ENCODE measurements at regions of chr13 and their contacts with region 1.

Region 1: DNA sequence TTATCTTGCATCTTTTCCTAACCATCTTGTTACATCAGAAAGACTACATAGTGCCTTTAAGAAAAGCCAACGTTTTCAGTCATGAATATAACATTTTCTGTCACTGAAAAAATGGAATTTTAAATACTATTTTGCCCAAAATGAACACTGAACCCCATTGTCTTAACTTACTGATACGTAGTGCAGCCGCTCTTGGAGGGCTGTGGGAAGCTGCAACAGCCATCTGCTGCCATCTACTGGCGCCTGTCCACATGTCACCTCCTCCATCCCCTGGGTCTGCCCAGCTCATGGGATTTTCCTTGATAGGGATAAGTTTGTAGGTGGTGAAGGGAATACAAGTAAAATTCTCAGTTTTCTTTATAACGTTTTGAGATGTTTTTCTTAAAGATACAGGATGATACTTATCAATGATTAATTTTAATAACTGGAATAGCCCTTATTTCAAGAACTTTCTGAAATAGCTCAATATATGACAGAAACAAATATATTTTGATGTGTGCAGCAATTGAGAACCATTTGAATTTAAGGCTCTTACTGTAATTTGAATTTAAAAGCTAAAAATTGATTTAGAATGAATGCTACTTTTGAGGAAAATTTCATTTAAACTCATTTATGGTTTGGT is 73.7 kb downstream of the GGACT start:
- DNase-seq: peak; percentile 71 to 85 (median 76)
- ATAC-seq: peak; percentile 91 to 94 (median 92)
- H3K4me3 ChIP-seq: no peak overlapping the region
- H3K27ac ChIP-seq: no peak overlapping the region
- H3K4me1 ChIP-seq: peaks cover 0 to 20% (median 5%) of the 10 kb centered on the region in 12 donors
- H3K27me3 ChIP-seq: no peaks in the 10 kb centered on the region
- CTCF ChIP-seq: peak; percentile 83 to 96 (median 93)
- POLR2A ChIP-seq: no peak

Region 2: GRCh38 chr13:99909824-99910619 is 604.9 kb before region 1 on chr13:
- intact Hi-C with region 1: loop called in 5 of 10 experiments (anchors 5 kb)
- DNase-seq: no peak
- ATAC-seq: peak; percentile 20 to 70 (median 61)
- H3K4me3 ChIP-seq: no peak overlapping the region
- H3K27ac ChIP-seq: no peak overlapping the region
- H3K4me1 ChIP-seq: no peaks in the 10 kb centered on the region
- H3K27me3 ChIP-seq: peaks cover 0 to 72% (median 9%) of the 10 kb centered on the region in 9 donors
- CTCF ChIP-seq: no peak
- POLR2A ChIP-seq: no peak

Region 3: DNA sequence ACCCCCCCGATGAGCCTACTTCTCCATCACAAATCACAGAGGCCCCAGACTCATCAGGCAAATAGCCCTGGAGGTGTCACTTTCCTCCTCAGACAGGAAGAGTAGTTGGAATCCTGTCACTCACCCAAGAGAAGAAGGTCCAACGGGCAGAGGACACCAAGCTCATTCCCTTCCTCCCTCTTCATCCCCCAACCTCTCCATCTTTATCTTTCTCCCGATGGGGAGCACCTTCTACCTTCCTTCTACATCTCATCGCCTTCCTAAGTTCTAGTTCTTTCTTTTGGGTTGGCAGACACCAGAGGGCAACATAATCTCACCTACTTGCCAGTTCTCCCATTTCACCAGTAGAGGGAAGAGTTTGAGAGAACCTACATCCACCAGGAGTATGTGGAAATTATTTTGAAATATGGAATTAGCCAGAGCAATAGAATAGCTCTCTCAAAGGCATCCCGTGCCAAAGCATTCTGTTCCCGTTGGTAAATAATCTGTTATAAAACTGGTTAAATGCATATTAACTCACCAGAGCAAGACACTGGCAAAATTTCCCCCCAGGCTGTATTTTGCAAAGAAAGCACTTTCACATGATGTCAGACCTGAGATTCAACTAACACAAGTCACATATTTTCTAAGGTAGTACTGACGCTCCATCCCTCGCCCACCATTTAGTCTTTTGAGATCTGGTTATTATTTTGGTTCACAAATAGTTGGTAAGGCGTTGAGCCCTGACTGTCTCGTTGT is 598.4 kb before region 1 on chr13:
- intact Hi-C with region 1: loop called in 9 of 10 experiments (anchors 2 to 5 kb)
- DNase-seq: no peak
- ATAC-seq: peak in 3 of 4 donors; percentile 67 to 76 (median 69)
- H3K4me3 ChIP-seq: no peak overlapping the region
- H3K27ac ChIP-seq: no peak overlapping the region
- H3K4me1 ChIP-seq: no peaks in the 10 kb centered on the region
- H3K27me3 ChIP-seq: peaks cover 0 to 46% (median 8%) of the 10 kb centered on the region in 9 donors
- CTCF ChIP-seq: peak; percentile 61 to 88 (median 78)
- POLR2A ChIP-seq: no peak

Region 4: GRCh38 chr13:100235311-100235901 is 279.5 kb before region 1 on chr13:
- intact Hi-C with region 1: loop called in 5 of 10 experiments (anchors 5 to 10 kb)
- DNase-seq: no peak
- ATAC-seq: no peak
- H3K4me3 ChIP-seq: peak overlapping the region in 1 of 12 donors; percentile 29
- H3K27ac ChIP-seq: no peak overlapping the region
- H3K4me1 ChIP-seq: peaks cover 0 to 25% (median 14%) of the 10 kb centered on the region in 12 donors
- H3K27me3 ChIP-seq: no peaks in the 10 kb centered on the region
- CTCF ChIP-seq: peak; percentile 33 to 74 (median 56)
- POLR2A ChIP-seq: no peak

Region 5: GRCh38 chr13:100244431-100244830 is 270.5 kb before region 1 on chr13:
- intact Hi-C with region 1: loop called in 4 of 10 experiments (anchors 5 to 10 kb)
- DNase-seq: no peak
- ATAC-seq: peak in 1 of 4 donors; percentile 30
- H3K4me3 ChIP-seq: no peak overlapping the region
- H3K27ac ChIP-seq: no peak overlapping the region
- H3K4me1 ChIP-seq: peaks cover 0 to 11% (median 3%) of the 10 kb centered on the region in 12 donors
- H3K27me3 ChIP-seq: no peaks in the 10 kb centered on the region
- CTCF ChIP-seq: no peak
- POLR2A ChIP-seq: no peak

Region 6: DNA sequence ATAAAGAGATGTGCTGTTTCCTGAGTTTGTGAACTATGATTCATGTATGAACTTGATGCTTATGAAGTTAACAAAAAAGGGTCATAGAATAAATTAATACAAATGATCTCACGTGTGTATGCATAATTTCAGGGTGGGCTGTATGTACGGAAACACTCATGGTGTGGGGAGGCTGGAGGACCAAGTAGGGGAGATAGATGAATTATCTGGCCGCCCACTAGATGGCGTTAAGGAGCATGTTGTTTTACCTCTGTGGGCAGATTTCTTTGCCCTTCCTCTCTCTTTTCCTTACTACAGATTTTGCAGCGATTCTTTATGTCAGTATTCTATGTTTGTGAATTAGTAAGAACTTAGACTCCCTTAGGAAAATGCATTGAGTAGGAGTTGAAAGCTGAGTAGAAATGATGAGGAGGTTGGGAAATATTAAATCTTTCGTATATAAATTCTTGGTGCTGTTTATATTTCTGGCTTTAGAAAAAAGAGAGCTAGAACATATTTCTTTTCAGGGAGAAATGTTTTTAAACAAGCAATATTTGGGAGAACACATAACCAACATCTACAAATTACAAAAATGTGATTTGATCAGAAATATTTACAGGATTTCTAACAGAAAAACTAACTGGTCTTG is 207.1 kb after region 1 on chr13:
- intact Hi-C with region 1: no loop called
- DNase-seq: peak in 1 of 5 donors; percentile 17
- ATAC-seq: peak in 1 of 4 donors; percentile 41
- H3K4me3 ChIP-seq: no peak overlapping the region
- H3K27ac ChIP-seq: no peak overlapping the region
- H3K4me1 ChIP-seq: no peaks in the 10 kb centered on the region
- H3K27me3 ChIP-seq: peaks cover 0 to 10% (median 4%) of the 10 kb centered on the region in 9 donors
- CTCF ChIP-seq: peak; percentile 39 to 72 (median 60)
- POLR2A ChIP-seq: no peak